ENCODE measurements at regions of chr11 and their contacts with region 1.

Region 1: DNA sequence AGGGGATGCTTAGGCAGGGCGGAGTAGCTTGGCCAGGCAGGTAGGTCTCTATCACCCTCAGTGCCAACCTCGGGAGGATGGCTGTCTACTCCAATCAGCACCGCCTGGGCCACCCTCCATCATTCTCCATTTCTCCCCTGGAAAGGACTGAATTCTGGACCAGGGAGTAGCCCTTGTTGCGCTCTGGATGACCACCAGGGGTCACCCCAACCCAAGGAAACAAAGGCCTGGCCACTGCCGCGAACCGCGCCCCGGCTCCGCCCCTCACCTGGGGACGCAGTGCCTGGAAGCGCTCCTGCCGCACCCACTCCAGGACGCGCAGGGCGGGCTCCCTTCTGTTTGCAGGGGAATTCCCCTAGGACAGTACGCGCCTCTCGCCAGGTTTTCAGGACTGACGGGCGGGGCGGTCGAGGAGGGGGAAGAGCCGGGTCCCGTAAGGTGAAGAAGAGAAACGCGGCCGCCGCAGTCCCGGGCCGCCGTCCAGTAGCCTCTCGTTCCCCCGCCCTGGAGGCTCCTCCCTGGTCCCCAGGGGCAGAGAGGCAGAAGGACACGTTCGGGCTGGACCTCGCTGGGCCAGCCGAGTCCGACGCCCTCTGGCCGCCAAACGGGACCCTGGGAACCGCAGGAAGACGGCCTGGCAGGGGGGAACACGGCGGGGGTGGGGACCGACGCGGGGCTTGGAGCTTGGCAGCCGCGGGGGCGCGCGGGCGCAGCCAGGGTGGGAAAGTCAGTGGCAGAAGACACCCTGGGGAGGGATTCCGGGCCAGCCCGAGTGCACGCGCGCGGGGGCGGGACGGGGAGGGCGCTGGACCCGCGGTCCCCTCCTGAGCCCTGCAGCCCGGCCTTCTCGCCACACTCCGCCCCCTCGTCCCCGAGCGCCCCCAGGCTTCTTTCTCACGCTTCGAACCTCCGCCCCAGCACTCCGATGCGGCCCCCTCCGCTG is 7.1 kb downstream of the SCN4B start:
- DNase-seq: peak; percentile 77 to 94 (median 84)
- H3K4me3 ChIP-seq: peak overlapping the region; percentile 43 to 98 (median 74)
- H3K27ac ChIP-seq: peak overlapping the region in 42 of 59 donors; percentile 1 to 85 (median 64)
- H3K27me3 ChIP-seq: peaks cover 0 to 3% (median 0%) of the 10 kb centered on the region in 45 donors
- CTCF ChIP-seq: peak; percentile 86 to 98 (median 94)

Region 2: GRCh38 chr11:117833401-117833891 is 312.1 kb before region 1 on chr11:
- intact Hi-C with region 1: no loop called
- DNase-seq: peak in 6 of 10 donors; percentile 8 to 45 (median 28)
- H3K4me3 ChIP-seq: no peak overlapping the region
- H3K27ac ChIP-seq: peak overlapping the region in 5 of 59 donors; percentile 16 to 37 (median 18)
- H3K27me3 ChIP-seq: peaks cover 0 to under 1% (median 0%) of the 10 kb centered on the region in 45 donors
- CTCF ChIP-seq: no peak

Region 3: DNA sequence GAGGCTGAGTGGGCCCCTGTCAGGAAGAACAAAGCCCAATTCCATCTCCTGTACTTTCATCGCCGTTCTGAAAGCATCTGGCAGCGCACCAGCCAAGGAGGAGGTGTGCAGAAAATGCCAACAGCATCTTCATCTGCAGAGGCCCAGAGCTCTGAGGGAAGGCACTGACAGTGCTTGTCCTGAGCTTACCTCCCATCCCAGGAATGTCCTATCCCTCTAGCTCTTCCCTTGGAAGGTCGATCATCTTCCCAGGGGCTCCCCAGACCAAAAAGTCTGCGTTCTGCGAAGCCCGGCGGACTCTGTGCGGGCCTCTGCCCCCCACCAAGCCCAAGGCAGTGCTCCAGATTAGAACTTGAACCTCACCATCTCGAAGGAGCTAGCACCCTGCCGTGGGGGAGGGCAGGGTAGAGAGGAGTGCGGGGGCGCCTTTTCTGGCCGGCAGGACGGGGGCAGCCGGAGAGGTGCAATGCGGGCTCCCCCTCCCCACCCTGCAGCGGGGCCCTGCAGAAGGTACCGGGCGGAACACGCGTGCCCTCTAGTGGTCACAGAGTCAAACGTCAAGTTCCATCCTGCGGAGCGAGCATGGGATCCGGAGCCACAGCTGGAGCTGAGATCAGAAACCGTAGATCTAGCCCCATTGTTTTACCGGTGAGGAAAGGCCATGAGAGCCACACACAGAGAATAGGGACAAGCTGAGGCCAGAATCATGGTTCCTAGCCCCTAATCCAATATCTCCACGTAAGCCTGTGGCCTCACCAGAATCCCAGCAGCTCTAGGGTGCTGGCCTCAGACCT is 25.9 kb after region 1 on chr11:
- intact Hi-C with region 1: loop called (anchors 1 kb)
- DNase-seq: peak; percentile 77 to 91 (median 88)
- H3K4me3 ChIP-seq: peak overlapping the region in 57 of 59 donors; percentile 1 to 67 (median 53)
- H3K27ac ChIP-seq: peak overlapping the region in 58 of 59 donors; percentile 1 to 93 (median 81)
- H3K27me3 ChIP-seq: no peaks in the 10 kb centered on the region
- CTCF ChIP-seq: peak; percentile 33 to 98 (median 94)

Region 4: DNA sequence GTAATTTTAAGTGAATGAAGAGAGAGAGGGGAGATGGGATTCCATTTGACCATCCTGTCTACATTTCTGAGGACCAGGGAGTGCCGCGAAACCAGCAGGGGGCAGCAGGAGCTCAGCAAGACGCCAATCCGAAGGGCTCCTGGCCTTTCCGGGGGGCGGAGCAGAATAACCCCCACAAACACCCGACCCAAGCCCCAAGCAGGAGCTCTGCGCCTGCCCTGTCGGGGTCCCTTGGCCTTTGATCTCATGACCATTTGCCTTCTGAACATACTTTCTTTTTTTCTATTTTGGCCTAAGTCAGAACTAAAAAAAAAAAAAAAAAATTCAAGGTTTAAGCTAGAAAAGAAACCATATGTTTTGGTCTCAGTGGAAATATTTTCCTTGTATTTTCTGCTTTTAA is 52.8 kb after region 1 on chr11:
- intact Hi-C with region 1: loop called in 1 of 2 experiments (anchors 5 kb)
- DNase-seq: peak; percentile 62 to 86 (median 82)
- H3K4me3 ChIP-seq: peak overlapping the region in 29 of 59 donors; percentile 7 to 53 (median 33)
- H3K27ac ChIP-seq: no peak overlapping the region
- H3K27me3 ChIP-seq: peaks cover 0 to 4% (median 0%) of the 10 kb centered on the region in 45 donors
- CTCF ChIP-seq: peak; percentile 81 to 97 (median 91)

Region 5: GRCh38 chr11:118290923-118291322 is 145.4 kb after region 1 on chr11:
- intact Hi-C with region 1: loop called in 1 of 2 experiments (anchors 2 kb)
- DNase-seq: no peak
- H3K4me3 ChIP-seq: no peak overlapping the region
- H3K27ac ChIP-seq: no peak overlapping the region
- H3K27me3 ChIP-seq: peaks cover 0 to 6% (median 0%) of the 10 kb centered on the region in 45 donors
- CTCF ChIP-seq: peak in 48 of 56 donors; percentile 8 to 72 (median 38)

Region 6: GRCh38 chr11:118353084-118353710 is 207.6 kb after region 1 on chr11:
- intact Hi-C with region 1: loop called (anchors 1 to 5 kb)
- DNase-seq: no peak
- H3K4me3 ChIP-seq: no peak overlapping the region
- H3K27ac ChIP-seq: no peak overlapping the region
- H3K27me3 ChIP-seq: peaks cover 0 to 24% (median 3%) of the 10 kb centered on the region in 45 donors
- CTCF ChIP-seq: peak; percentile 51 to 85 (median 70)

Measured in dorsolateral prefrontal cortex (tissue), 120 donors.